Sigmoid colon (tissue), 7 donors: ENCODE measurements at regions of chr17 and their contacts with region 1.

Region 1: GRCh38 chr17:42287926-42288802 is at the start of gene STAT5A:
- DNase-seq: peak; percentile 98
- H3K4me3 ChIP-seq: peak within 1 kb of the TSS; percentile 61 to 85 (median 64)
- H3K27ac ChIP-seq: peak within 1 kb of the TSS; percentile 92 to 97 (median 94)
- H3K4me1 ChIP-seq: peaks cover 0 to 38% (median 35%) of the 10 kb centered on the region in 4 donors
- H3K27me3 ChIP-seq: no peaks in the 10 kb centered on the region
- CTCF ChIP-seq: no peak
- EP300 ChIP-seq: no peak
- POLR2A ChIP-seq: peak; percentile 18 to 54
- total RNA-seq, gene STAT5A: 57.2 to 91.0 (median 80.8) TPM

Region 2: DNA sequence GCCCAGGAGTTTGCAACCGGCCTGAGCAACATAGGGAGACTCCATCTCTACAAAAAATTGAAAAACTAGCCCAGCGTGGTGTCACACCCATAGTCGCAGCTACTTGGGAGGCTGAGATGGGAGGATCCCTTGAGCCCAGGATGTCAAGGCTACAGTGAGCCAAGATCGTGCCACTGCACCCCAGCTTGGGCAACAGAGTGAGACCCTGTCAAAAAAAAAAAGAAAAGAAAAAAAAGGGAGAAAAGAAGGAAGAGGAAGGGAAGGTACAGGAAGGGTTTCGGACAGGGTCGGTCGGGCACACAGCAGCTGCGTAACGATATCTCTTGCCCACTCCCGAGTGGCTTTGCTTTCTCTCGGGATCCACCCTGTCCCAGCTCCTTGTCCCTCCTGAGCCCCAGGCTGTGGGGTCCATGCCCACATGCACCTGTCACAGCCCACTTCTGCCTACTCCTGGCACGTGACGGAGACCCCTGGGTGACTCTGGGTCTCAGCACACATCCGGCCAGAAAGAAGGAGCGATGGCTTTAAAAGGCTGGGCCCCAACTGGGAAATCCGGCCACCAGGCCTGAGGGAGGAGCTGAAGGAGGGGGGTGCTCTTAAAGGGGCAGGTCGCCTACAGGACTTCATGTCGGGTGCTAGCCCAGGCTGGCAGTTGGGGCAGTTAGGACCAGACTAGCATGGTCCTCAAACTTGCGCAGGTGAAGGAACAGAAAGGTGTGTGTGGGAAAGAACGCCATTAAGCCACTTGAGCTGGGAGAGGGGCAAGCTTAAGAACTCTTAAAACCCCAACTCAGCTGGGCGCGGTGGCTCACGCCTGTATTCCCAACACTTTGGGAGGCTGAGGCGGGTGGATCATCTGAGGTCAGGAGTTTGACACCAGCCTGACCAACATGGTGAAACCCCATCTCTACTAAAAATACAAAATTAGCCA is 93.9 kb before region 1 on chr17 and contains the start of gene GHDC:
- intact Hi-C with region 1: loop called (anchors 5 kb)
- DNase-seq: peak; percentile 94
- H3K4me3 ChIP-seq: peak within 1 kb of the TSS; percentile 62 to 81 (median 64)
- H3K27ac ChIP-seq: peak within 1 kb of the TSS; percentile 81 to 86 (median 84)
- H3K4me1 ChIP-seq: peaks cover 0 to 26% (median 19%) of the 10 kb centered on the region in 4 donors
- H3K27me3 ChIP-seq: no peaks in the 10 kb centered on the region
- CTCF ChIP-seq: no peak
- EP300 ChIP-seq: no peak
- POLR2A ChIP-seq: no peak
- total RNA-seq, gene GHDC: 32.1 to 76.0 (median 42.4) TPM

Region 3: GRCh38 chr17:42221937-42222745 is 66.0 kb before region 1 on chr17:
- intact Hi-C with region 1: loop called (anchors 5 kb)
- DNase-seq: no peak
- H3K4me3 ChIP-seq: no peak overlapping the region
- H3K27ac ChIP-seq: no peak overlapping the region
- H3K4me1 ChIP-seq: no peaks in the 10 kb centered on the region
- H3K27me3 ChIP-seq: no peaks in the 10 kb centered on the region
- CTCF ChIP-seq: peak in 3 of 4 experiments; percentile 17 to 49 (median 39)
- EP300 ChIP-seq: no peak
- POLR2A ChIP-seq: no peak

Region 4: GRCh38 chr17:42311240-42312034 is 23.3 kb after region 1 on chr17:
- intact Hi-C with region 1: loop called (anchors 2 kb)
- DNase-seq: peak; percentile 99
- H3K4me3 ChIP-seq: peak overlapping the region in 2 of 4 donors; percentile 37 to 43
- H3K27ac ChIP-seq: peak overlapping the region; percentile 87 to 98 (median 91)
- H3K4me1 ChIP-seq: peaks cover 0 to 43% (median 38%) of the 10 kb centered on the region in 4 donors
- H3K27me3 ChIP-seq: no peaks in the 10 kb centered on the region
- CTCF ChIP-seq: no peak
- EP300 ChIP-seq: peak in 1 of 4 donors; percentile 40
- POLR2A ChIP-seq: no peak